H1 (cell line): ENCODE measurements at regions of chr1 and their contacts with region 1.

Region 1: DNA sequence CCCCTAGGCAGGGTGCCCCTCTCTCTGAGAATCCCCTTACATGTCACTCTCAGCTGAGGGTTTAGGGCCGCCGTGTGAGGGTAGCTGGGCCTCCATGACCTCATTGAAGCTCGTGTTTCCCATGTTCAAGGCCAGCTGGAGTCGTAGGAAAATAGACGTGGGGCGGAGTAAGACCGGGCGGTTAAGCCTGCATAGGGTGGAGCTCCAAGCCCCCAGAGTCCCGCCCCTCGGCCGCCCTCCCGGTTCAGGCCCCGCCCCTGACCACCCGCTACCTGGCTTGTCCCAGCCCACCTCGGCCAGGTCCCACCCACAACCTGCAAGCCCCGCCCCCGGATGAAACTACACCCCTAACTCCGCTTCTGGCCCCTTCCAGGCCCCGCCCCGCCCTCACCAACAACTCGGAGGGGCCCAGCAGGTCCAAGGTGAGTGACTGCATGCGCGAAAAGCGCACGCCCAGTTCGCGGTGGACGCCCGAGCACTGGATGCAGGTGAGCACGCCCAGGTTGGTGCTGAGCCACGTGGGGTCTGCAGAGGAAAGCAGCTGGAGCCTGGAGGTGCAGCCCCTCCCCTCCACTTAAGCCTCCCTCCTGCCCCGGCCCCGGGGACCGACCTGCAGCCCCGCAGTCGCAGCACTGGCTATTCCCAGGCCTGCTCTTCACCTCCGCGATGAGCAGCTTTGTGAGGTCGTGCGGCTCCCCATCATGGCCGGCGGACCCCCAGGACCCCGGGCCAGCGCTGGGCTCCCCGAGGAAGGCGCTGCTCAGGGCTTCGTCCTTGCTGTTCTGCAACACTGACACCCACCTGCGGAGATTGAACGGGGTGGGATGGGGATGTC is 12.2 kb upstream of the TCEA3 start:
- DNase-seq: peak; percentile 88 to 99
- H3K4me3 ChIP-seq: peak overlapping the region in 3 of 4 experiments; percentile 5 to 49 (median 32); a peak in 5 of 8 replicates
- H3K27ac ChIP-seq: no peak overlapping the region
- H3K4me1 ChIP-seq: peaks cover 0 to 8% (median 4%) of the 10 kb centered on the region in 4 experiments; a peak in 5 of 7 replicates
- H3K27me3 ChIP-seq: no peaks in the 10 kb centered on the region
- CTCF ChIP-seq: no peak
- EP300 ChIP-seq: 0 out of 3 replicates have a peak, but pooled peaks of 1 of the 2 experiments have one; percentile 41
- POLR2A ChIP-seq: peak in 1 of 2 experiments; percentile 49; a peak in 1 of 3 replicates
- RAD21 ChIP-seq: no peak; a peak in 1 of 4 replicates

Region 2: DNA sequence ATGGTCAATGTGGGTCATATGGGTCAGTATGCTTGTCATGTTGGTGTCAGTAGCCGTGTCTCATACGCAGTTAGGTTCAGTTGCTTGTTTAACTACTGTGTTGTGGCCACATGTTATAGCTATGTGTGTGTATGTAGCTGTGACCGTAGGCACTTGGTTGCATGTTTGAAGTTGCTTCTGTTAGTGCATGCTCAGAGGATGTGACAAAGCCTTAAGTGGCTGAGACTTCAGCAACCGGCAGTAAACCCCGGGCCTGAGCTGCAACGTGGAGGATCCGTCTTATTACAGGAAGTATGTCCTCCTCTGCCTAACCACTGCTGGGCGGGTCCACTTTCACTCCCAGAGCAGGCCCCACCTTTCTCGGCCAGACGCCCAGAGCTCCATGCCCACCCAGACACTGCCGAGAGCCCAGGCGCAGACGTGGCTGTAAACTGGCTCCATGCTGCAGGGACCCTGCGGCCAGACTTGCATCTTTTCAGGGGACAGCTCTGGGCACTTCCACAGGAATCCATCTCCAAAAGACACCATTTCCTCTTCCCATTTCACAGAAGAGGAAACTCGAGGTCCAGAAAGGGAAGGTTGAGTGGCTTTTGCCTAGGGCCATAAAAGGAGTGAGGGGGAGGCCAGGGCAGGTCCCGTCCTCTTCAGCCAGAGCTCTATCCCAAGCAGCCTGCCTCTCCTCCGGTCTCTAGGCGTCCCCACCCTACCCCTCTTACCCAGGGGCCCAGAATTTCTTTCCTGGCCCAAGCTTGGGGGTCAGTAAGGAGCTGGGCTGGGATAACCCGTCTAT is 14.3 kb before region 1 on chr1:
- CTCF ChIA-PET with region 1: interaction called, 13 read pairs
- POLR2A ChIA-PET with region 1: interaction called, 14 read pairs
- DNase-seq: no peak
- H3K4me3 ChIP-seq: no peak overlapping the region
- H3K27ac ChIP-seq: no peak overlapping the region
- H3K4me1 ChIP-seq: peaks cover 1 to 11% (median 3%) of the 10 kb centered on the region in 4 experiments; a peak in 6 of 7 replicates
- H3K27me3 ChIP-seq: peaks cover 78 to 95% (median 93%) of the 10 kb centered on the region in 4 experiments
- CTCF ChIP-seq: no peak
- EP300 ChIP-seq: no peak
- POLR2A ChIP-seq: no peak
- RAD21 ChIP-seq: no peak

Region 3: DNA sequence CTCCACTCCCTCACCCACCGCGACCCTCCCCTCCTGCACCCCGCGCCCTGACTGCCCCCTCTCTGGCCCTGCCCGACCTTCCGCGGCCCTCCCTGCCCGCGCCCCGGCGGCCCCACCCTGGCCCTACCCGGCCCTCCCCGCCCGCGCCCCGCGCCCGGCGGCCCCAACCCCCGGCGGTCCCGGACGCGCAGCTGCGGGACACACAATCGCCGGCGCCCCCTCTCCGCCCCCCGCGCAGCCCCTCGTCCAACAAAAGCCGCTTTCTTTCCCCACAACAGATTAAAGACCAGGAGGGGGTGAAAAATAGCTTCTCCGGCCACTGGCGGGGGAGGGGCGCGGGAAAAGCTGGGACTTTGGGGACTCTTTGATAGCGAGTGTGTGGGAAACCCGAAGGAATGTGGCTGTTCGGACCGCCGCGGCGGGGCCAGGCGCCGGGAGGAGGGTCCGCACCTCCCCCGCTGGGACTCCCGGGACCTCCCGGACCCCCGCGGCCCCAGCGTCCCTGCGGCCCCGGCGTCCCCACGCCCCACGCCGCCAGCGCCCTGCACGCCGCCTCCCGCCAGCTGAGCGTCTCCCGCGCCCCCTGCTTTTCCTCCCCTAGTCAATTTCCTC is 131.4 kb after region 1 on chr1:
- CTCF ChIA-PET with region 1: no interaction called
- POLR2A ChIA-PET with region 1: no interaction called
- DNase-seq: peak in 1 of 2 experiments; percentile 68
- H3K4me3 ChIP-seq: peak overlapping the region; percentile 42 to 67 (median 46)
- H3K27ac ChIP-seq: 0 out of 2 replicates have a peak overlapping the region, but pooled peaks have one; percentile 13
- H3K4me1 ChIP-seq: peaks cover 7 to 23% (median 16%) of the 10 kb centered on the region in 4 experiments
- H3K27me3 ChIP-seq: peaks cover 0 to 5% (median 0%) of the 10 kb centered on the region in 4 experiments; a peak in 4 of 7 replicates
- CTCF ChIP-seq: no peak
- EP300 ChIP-seq: no peak
- POLR2A ChIP-seq: no peak; a peak in 1 of 3 replicates
- RAD21 ChIP-seq: no peak